ENCODE measurements at regions of chr3 and their contacts with region 1.

Region 1: DNA sequence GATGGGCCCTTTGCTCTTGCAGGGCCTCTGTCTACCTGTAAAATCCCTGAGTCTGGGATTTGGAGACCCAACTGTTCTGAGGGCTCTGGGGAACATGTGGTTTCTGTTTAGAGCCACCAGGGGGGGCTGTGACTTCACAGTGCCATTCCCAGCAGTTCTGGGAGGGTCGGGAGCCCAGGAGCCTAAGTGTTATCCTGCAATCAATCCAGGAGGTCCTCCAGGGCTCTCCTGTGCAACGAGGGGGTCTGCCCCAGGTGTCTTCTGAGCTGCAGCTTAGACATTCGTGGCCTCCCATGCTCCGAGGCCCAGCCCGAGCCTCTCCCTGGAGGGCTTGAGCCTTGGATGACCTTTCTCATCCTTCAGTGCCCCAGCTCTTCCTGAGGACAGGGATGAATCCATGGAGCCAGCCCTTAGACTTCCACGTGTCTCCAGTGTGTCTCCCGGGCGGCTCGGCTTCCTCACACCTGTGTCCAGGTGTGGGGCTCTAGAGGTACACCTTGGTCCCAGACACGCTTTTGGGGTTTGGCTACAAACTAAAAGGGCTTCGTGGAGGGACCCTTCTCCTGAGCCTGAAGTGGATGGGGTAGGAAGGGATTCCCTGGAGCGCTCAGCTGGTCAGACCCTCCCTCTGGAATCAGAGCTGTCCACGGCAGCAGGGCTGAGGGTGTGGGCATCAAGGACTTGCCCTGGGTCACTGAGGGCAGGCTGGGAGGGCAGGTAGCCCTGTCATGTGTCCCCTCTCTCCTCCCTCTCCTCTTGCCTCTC is 20.3 kb upstream of the ABTB1 start:
- DNase-seq: peak; percentile 63
- H3K4me3 Mint-ChIP-seq: no peak overlapping the region
- H3K27ac Mint-ChIP-seq: no peak overlapping the region
- H3K4me1 Mint-ChIP-seq: peaks cover 7% of the 10 kb centered on the region
- H3K27me3 Mint-ChIP-seq: no peaks in the 10 kb centered on the region
- CTCF ChIP-seq: peak; percentile 96

Region 2: GRCh38 chr3:127590593-127591477 is 61.6 kb before region 1 on chr3 and contains the start of gene TPRA1:
- CTCF ChIA-PET with region 1: no interaction called
- POLR2A ChIA-PET with region 1: no interaction called
- intact Hi-C with region 1: no loop called
- DNase-seq: peak; percentile 99
- H3K4me3 Mint-ChIP-seq: peak within 1 kb of the TSS; percentile 77
- H3K27ac Mint-ChIP-seq: peak within 1 kb of the TSS; percentile 98
- H3K4me1 Mint-ChIP-seq: peaks cover 18% of the 10 kb centered on the region
- H3K27me3 Mint-ChIP-seq: no peaks in the 10 kb centered on the region
- CTCF ChIP-seq: peak; percentile 20
- total RNA-seq, gene TPRA1: 47.0 and 57.2 TPM in 2 replicates

Region 3: DNA sequence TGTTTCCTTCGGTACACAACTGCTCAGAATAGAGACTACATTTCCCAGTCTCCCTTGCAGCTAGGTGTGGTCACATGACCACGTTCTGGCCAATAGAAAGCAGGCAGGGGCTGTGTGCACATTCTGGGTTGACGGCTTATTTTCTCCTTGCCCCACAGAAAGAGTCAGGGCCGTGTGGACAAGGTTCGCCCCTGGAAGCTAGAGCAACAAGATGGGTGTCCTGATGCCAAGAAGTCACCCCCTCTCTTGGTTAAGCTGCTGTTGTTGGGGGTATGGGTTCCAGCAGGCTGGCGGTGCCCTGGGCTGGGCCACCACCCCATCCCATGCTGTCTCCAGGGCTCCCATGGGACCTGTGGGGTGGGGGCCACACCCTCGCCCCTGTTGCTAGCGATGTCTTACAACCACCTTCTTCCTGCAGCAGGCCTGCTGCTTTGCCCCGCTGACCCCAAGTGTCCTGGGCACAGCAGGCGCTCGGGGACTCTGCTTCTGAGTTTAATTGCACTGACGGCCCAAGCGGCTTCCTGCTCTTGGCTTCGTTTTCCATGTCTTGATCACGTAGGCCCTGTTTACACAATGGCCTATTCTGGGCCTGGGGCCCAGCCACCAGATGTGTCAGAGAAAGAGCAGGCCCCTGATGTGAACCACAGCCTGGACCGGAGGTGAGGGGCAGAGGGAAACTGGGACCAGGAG is 45.3 kb after region 1 on chr3:
- CTCF ChIA-PET with region 1: interaction called, 16 read pairs
- POLR2A ChIA-PET with region 1: no interaction called
- intact Hi-C with region 1: no loop called
- DNase-seq: peak; percentile 78
- H3K4me3 Mint-ChIP-seq: no peak overlapping the region
- H3K27ac Mint-ChIP-seq: peak overlapping the region; percentile 55
- H3K4me1 Mint-ChIP-seq: peaks cover 10% of the 10 kb centered on the region
- H3K27me3 Mint-ChIP-seq: no peaks in the 10 kb centered on the region
- CTCF ChIP-seq: no peak

Region 4: DNA sequence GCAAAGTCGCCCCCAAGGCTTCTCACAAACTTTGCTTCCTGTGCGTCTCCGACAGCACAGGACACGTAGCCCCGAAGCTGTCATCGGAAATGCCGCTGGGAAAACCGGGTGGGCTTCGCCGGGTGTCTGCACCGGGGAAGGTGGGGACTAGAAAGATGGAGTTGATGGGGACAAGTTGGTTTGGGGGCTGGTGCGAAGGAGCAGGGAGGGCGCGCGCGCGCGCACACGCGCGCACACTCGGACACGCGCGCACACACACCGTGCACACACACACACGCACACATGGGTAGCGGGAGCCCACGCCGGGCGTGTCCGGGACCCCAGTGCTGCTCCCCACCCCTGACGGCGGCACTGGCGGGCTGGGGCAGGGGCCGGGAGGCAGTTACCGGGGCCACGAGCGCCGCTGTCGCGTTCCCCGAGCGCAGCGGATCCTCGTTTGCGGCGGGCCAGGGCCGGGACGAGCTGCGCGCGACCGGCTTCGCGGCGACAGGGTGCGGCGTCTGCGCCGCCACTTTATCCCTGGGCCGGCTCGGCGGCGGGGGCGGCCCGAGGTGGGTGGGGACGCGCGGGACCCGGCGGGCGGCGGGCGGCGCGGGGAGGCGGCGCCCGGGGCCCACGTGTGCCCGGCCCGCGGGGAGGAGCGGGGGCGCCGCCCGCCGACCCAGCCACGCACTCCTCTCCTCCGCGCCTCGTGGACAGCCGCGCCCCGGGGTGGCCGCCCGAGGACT is 170.4 kb after region 1 on chr3:
- CTCF ChIA-PET with region 1: interaction called, 4 read pairs
- POLR2A ChIA-PET with region 1: no interaction called
- intact Hi-C with region 1: loop called (anchors 5 kb)
- DNase-seq: no peak
- H3K4me3 Mint-ChIP-seq: peak overlapping the region; percentile 90
- H3K27ac Mint-ChIP-seq: no peak overlapping the region
- H3K4me1 Mint-ChIP-seq: peaks cover 29% of the 10 kb centered on the region
- H3K27me3 Mint-ChIP-seq: no peaks in the 10 kb centered on the region
- CTCF ChIP-seq: no peak

Region 5: DNA sequence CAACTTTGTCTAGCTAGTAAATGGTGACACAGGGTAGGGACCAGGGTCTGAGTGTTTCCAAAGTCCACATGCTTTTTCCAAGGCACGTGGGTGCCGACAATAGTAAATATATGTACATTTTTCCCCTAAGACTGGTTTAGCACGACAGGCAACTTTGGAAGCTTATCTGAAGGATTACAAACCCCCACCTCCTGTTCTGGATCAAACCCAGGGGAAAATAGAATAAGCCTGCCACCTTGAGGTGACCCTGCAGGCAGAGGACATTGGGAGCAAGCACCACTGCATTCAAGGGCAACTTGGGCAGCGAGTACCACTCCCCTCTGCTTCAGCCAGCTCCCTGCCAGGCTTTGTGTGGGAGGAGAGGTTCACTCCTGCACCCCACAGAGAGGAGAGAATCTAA is 307.4 kb after region 1 on chr3:
- CTCF ChIA-PET with region 1: interaction called, 12 read pairs
- POLR2A ChIA-PET with region 1: no interaction called
- intact Hi-C with region 1: loop called (anchors 1 kb)
- DNase-seq: peak; percentile 41
- H3K4me3 Mint-ChIP-seq: no peak overlapping the region
- H3K27ac Mint-ChIP-seq: no peak overlapping the region
- H3K4me1 Mint-ChIP-seq: peaks cover 15% of the 10 kb centered on the region
- H3K27me3 Mint-ChIP-seq: no peaks in the 10 kb centered on the region
- CTCF ChIP-seq: no peak

Region 6: GRCh38 chr3:128107834-128108233 is 455.4 kb after region 1 on chr3:
- CTCF ChIA-PET with region 1: no interaction called
- POLR2A ChIA-PET with region 1: no interaction called
- intact Hi-C with region 1: no loop called
- DNase-seq: no peak
- H3K4me3 Mint-ChIP-seq: no peak overlapping the region
- H3K27ac Mint-ChIP-seq: no peak overlapping the region
- H3K4me1 Mint-ChIP-seq: peaks cover 14% of the 10 kb centered on the region
- H3K27me3 Mint-ChIP-seq: no peaks in the 10 kb centered on the region
- CTCF ChIP-seq: no peak

Region 7: DNA sequence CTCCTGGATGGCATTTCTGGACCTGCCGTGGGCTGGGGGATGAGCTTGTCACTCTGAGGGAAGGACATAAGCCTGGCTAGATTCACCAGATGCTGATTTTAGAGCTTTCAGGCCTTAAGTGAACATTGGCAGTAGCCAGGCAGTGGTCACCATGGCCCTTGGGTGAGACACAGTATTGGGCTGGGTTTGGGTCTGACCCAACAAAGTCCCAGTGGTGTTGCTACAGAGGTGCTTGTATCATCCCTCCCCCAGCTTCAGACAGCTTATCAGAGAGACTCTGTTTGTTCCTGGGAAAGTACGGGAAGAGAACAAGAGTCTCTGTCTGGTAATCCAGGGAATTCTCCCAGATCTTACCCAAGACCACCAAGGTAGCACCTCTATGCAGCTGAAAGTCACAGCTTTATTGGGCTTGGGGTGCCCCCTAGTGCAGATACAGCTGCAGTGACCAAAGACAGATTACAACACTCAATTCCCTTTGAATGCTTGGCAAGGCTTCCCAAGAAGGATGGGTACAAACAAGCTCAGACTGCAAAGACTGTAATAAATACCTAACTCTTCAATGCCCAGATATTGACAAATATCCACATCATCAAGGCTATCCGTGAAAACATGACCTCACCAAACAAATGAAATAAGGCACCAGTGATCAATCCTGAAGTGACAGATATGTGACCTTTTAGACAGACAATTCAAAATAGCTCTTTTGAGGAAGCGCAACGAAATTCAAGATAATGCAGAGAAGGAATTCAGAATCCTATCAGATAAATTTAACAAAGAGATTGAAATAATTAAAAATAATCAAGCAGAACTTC is 481.1 kb after region 1 on chr3:
- CTCF ChIA-PET with region 1: interaction called, 3 read pairs
- POLR2A ChIA-PET with region 1: no interaction called
- intact Hi-C with region 1: loop called (anchors 10 kb)
- DNase-seq: peak; percentile 75
- H3K4me3 Mint-ChIP-seq: no peak overlapping the region
- H3K27ac Mint-ChIP-seq: no peak overlapping the region
- H3K4me1 Mint-ChIP-seq: no peaks in the 10 kb centered on the region
- H3K27me3 Mint-ChIP-seq: peaks cover 18% of the 10 kb centered on the region
- CTCF ChIP-seq: peak; percentile 80

Measured in MCF 10A (cell line).